AG04449 (cell line): ENCODE measurements at regions of chr10 and their contacts with region 1.

Region 1: DNA sequence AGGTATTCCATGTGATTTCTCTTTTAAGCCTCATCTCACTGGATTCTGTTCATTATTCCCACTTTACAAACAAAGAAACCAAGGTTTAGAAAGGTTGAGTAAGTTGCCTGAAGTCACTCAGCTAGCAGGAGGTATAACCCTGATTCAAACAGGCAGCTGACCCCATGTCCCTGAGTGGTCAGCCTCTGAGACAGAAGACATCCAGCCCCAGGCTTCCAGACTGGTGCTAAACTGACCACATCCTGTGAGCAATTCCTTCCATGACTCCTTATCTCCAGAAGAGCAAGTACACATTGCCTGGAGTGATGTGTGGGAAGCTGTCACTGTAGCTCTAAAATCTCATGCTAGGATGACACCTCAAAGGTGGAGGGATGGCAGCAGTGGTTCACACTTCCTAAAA is 3.7 kb downstream of the PLPP4 start:
- DNase-seq: peak; percentile 76
- H3K4me3 ChIP-seq: no peak overlapping the region
- CTCF ChIP-seq: no peak

Region 2: DNA sequence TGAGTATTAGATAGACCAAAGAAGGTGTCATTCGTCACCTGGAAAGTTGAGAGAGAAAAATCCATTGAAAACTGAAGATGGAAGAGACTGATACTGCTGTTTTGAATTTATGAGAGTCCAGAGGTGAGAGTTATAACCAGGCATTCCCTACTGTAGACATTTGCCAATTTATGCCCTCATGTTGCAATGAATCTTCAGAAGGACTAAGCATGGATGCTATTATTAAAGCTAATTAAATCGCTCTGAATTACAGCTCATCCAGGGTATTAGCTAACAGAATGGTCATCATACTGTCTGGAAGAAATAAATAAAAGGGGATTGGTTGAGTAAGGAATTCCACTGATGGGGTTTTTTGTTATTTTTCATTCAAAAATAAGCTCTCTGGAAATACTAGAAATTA is 105.4 kb before region 1 on chr10:
- CTCF ChIA-PET with region 1: no interaction called
- POLR2A ChIA-PET with region 1: no interaction called
- DNase-seq: no peak
- H3K4me3 ChIP-seq: no peak overlapping the region
- CTCF ChIP-seq: no peak

Region 3: GRCh38 chr10:120415709-120416330 is 45.0 kb before region 1 on chr10:
- CTCF ChIA-PET with region 1: no interaction called
- POLR2A ChIA-PET with region 1: interaction called, 10 read pairs
- DNase-seq: no peak
- H3K4me3 ChIP-seq: no peak overlapping the region
- CTCF ChIP-seq: no peak

Region 4: GRCh38 chr10:120436431-120437112 is 24.2 kb before region 1 on chr10:
- CTCF ChIA-PET with region 1: no interaction called
- POLR2A ChIA-PET with region 1: no interaction called
- DNase-seq: no peak
- H3K4me3 ChIP-seq: no peak overlapping the region
- CTCF ChIP-seq: no peak